CD8-positive, alpha-beta T cell (primary cell): ENCODE measurements at regions of chr10 and their contacts with region 1.

Region 1: DNA sequence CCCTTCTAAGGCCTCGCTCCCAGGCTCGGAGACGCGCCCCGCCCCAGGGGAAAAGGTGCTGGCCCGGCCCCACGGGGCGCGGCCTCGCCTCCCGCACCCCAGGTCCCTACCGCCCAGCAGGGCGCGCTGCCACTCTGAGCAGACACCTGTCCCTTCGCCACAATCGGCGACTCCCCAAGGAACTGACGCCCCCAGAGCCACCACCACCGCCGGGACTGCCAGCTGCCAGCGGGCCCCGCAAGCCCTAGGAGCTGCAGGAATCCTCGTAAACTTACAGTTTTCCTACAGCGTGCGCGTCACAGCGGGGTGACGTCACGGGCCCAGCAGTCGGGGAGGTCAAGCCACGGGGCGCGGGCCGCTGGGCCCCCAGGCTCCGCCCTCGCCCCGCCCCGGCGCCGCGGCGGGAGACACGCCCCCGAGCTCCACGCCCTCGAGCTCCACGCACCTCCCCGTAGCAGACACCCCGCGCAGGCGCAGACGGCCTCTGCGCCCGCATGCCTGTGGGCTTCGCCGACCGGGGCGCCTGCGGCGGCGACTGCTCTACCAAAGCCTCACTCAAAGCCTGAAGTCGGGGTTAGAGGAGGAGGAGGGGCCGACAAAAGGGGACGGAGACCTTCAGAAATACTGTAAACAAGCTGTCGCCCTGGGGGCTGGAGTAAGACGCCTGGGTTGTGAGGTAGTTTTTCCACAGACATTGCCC is at the start of gene ZNF438:
- DNase-seq: peak; percentile 91 to 98 (median 95)
- ATAC-seq: peak; percentile 81
- H3K4me3 ChIP-seq: peak within 1 kb of the TSS; percentile 74 to 98
- H3K4me3 Mint-ChIP-seq: peak within 1 kb of the TSS; percentile 90
- H3K27ac ChIP-seq: peak within 1 kb of the TSS; percentile 99 to 100
- H3K27ac Mint-ChIP-seq: peak within 1 kb of the TSS; percentile 99
- H3K4me1 ChIP-seq: peaks cover 20% of the 10 kb centered on the region
- H3K4me1 Mint-ChIP-seq: peaks cover 21% of the 10 kb centered on the region
- H3K27me3 ChIP-seq: no peaks in the 10 kb centered on the region
- H3K27me3 Mint-ChIP-seq: no peaks in the 10 kb centered on the region
- CTCF ChIP-seq: peak; percentile 59
- total RNA-seq, gene ZNF438: 1.5 to 1.7 TPM

Region 2: DNA sequence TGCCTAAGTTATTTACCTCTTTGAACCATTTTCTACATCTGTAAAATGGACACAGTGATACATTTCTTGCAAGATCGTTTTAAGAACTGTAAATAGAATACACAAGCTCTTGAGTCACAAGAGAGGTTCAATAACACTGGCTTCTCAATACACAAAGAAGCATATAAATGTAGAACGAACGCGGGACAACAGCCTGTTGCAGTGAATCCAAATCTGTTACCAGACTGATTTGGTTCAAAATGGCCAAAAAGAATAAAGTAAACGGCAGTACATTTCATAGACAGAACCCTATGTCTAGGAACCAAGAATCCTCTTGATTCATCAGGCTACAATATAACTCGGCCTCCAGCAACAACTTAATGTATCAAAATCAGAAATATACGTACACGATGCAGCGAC is 683.3 kb before region 1 on chr10:
- CTCF ChIA-PET with region 1: no interaction called
- POLR2A ChIA-PET with region 1: no interaction called
- intact Hi-C with region 1: loop called in 1 of 2 experiments (anchors 5 kb)
- DNase-seq: no peak
- ATAC-seq: peak; percentile 16
- H3K4me3 ChIP-seq: peak overlapping the region; percentile 95 to 98
- H3K4me3 Mint-ChIP-seq: peak overlapping the region; percentile 91
- H3K27ac ChIP-seq: peak overlapping the region; percentile 79 to 84
- H3K27ac Mint-ChIP-seq: peak overlapping the region; percentile 95
- H3K4me1 ChIP-seq: peaks cover 38% of the 10 kb centered on the region
- H3K4me1 Mint-ChIP-seq: peaks cover 51% of the 10 kb centered on the region
- H3K27me3 ChIP-seq: no peaks in the 10 kb centered on the region
- H3K27me3 Mint-ChIP-seq: no peaks in the 10 kb centered on the region
- CTCF ChIP-seq: no peak

Region 3: GRCh38 chr10:30722956-30723620 is 308.6 kb before region 1 on chr10:
- CTCF ChIA-PET with region 1: no interaction called
- POLR2A ChIA-PET with region 1: no interaction called
- intact Hi-C with region 1: loop called in 1 of 2 experiments (anchors 5 kb)
- DNase-seq: no peak
- ATAC-seq: no peak
- H3K4me3 ChIP-seq: no peak overlapping the region
- H3K4me3 Mint-ChIP-seq: no peak overlapping the region
- H3K27ac ChIP-seq: no peak overlapping the region
- H3K27ac Mint-ChIP-seq: no peak overlapping the region
- H3K4me1 ChIP-seq: peaks cover 3% of the 10 kb centered on the region
- H3K4me1 Mint-ChIP-seq: no peaks in the 10 kb centered on the region
- H3K27me3 ChIP-seq: no peaks in the 10 kb centered on the region
- H3K27me3 Mint-ChIP-seq: no peaks in the 10 kb centered on the region
- CTCF ChIP-seq: no peak

Region 4: DNA sequence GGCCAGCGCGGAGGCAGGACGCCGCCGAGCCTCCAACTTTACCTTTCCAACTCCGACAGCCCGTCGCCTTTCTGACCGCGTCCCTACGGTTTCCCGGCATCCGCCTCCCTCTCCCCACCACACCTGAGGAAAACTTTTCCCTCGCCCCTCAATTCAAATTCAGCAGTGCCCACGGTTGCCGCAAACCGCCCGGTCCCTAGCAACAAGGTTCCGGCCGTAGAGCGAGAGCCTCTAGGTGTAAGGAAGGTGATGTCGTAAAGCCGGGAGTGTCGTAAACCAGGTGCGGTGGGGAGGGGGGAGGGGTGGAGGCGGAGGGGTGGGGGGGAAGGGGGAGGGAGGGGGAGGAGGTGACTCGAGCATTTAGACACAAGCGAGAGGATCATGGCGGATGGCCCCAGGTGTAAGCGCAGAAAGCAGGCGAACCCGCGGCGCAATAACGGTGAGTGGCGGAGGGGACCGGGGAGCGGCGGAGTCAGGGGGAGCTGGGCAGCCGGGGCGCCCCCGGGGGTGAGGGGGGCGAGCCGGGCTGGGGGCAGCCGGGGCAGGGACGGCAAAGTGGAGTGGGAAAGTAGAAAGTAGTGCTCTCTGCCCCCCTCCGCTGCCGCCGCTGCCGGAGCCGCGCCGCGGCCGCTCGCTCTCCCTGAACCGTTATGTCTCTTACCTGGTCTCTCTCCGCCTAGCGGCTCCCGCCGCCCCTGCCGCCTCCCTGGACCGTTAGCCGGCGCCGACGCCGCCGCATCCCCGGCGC is 287.3 kb after region 1 on chr10 and contains the start of gene ZEB1:
- CTCF ChIA-PET with region 1: interaction called, 3 read pairs
- POLR2A ChIA-PET with region 1: interaction called, 7 read pairs
- intact Hi-C with region 1: loop called (anchors 1 kb)
- DNase-seq: peak; percentile 83 to 97 (median 90)
- ATAC-seq: peak; percentile 42
- H3K4me3 ChIP-seq: peak within 1 kb of the TSS; percentile 92 to 95
- H3K4me3 Mint-ChIP-seq: peak within 1 kb of the TSS; percentile 100
- H3K27ac ChIP-seq: peak within 1 kb of the TSS; percentile 90 to 95
- H3K27ac Mint-ChIP-seq: peak within 1 kb of the TSS; percentile 100
- H3K4me1 ChIP-seq: peaks cover 28% of the 10 kb centered on the region
- H3K4me1 Mint-ChIP-seq: peaks cover 39% of the 10 kb centered on the region
- H3K27me3 ChIP-seq: no peaks in the 10 kb centered on the region
- H3K27me3 Mint-ChIP-seq: no peaks in the 10 kb centered on the region
- CTCF ChIP-seq: no peak
- total RNA-seq, gene ZEB1: 145 to 153 TPM

Region 5: GRCh38 chr10:31759799-31760626 is 728.3 kb after region 1 on chr10:
- CTCF ChIA-PET with region 1: no interaction called
- POLR2A ChIA-PET with region 1: interaction called, 4 read pairs
- intact Hi-C with region 1: loop called (anchors 1 to 2 kb)
- DNase-seq: peak; percentile 90 to 98 (median 94)
- ATAC-seq: peak; percentile 93
- H3K4me3 ChIP-seq: peak overlapping the region; percentile 98 to 99
- H3K4me3 Mint-ChIP-seq: peak overlapping the region; percentile 88
- H3K27ac ChIP-seq: peak overlapping the region; percentile 92 to 95
- H3K27ac Mint-ChIP-seq: peak overlapping the region; percentile 97
- H3K4me1 ChIP-seq: peaks cover 8% of the 10 kb centered on the region
- H3K4me1 Mint-ChIP-seq: peaks cover 14% of the 10 kb centered on the region
- H3K27me3 ChIP-seq: no peaks in the 10 kb centered on the region
- H3K27me3 Mint-ChIP-seq: no peaks in the 10 kb centered on the region
- CTCF ChIP-seq: no peak

Region 6: DNA sequence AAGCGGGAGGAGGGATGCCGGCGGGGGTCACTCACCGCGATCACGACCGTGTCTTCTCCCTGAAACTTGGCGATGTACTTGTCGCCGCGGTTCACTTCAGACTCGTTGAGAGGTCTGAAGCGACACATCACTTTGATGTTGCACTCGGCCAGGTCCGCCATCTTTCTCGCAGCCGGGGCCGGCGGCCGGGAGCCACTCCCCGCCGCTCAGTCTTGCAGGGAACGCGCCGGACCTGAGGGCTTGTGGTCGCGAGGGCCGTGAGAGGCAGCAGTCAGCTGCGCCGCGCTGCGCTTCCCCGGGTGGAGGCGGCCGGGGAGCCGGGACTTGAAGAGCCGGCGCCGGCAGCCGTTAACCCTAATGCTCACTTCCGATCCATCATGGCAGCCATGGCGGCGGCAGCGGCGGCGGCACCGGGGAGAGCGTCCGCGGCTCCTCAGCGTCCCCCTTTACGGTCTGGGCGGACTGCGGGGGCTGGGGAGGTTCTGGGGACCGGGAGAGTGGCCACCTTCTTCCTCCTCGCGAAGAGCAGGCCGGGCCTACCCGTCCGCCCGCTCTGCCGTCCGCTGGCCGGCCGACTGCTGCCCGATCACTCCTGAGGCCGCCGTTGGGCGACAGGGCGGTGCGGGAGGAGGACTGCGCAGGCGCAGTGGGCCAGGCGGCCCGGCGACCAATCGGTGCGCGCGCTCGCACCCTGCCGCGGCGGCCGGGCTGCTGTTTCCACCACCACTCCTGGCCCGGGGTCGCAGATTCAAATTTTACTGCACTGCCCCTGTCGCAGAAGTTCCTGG is 1024.3 kb after region 1 on chr10 and contains the start of gene KIF5B:
- CTCF ChIA-PET with region 1: no interaction called
- POLR2A ChIA-PET with region 1: interaction called, 3 read pairs
- intact Hi-C with region 1: loop called (anchors 5 to 10 kb)
- DNase-seq: peak; percentile 69 to 93 (median 84)
- ATAC-seq: peak; percentile 79
- H3K4me3 ChIP-seq: peak within 1 kb of the TSS; percentile 74 to 89
- H3K4me3 Mint-ChIP-seq: peak within 1 kb of the TSS; percentile 96
- H3K27ac ChIP-seq: peak within 1 kb of the TSS; percentile 66 to 89
- H3K27ac Mint-ChIP-seq: peak within 1 kb of the TSS; percentile 94
- H3K4me1 ChIP-seq: peaks cover 41% of the 10 kb centered on the region
- H3K4me1 Mint-ChIP-seq: peaks cover 51% of the 10 kb centered on the region
- H3K27me3 ChIP-seq: no peaks in the 10 kb centered on the region
- H3K27me3 Mint-ChIP-seq: no peaks in the 10 kb centered on the region
- CTCF ChIP-seq: no peak
- total RNA-seq, gene KIF5B: 53.2 to 53.8 TPM